T-cell (primary cell): ENCODE measurements at regions of chr16 and their contacts with region 1.

Region 1: GRCh38 chr16:57648590-57649442 is 19.3 kb upstream of the ADGRG3 start:
- DNase-seq: peak; percentile 46 to 89 (median 79)
- ATAC-seq: peak; percentile 74 to 87 (median 84)
- H3K4me3 ChIP-seq: peak overlapping the region in 1 of 2 donors; percentile 32
- H3K4me3 Mint-ChIP-seq: peak overlapping the region; percentile 23 to 51 (median 25)
- H3K27ac ChIP-seq: peak overlapping the region; percentile 32
- H3K27ac Mint-ChIP-seq: peak overlapping the region; percentile 16 to 63
- H3K4me1 ChIP-seq: peaks cover 0 to 90% of the 10 kb centered on the region in 2 experiments
- H3K4me1 Mint-ChIP-seq: peaks cover 30 to 38% (median 30%) of the 10 kb centered on the region in 3 donors
- H3K27me3 ChIP-seq: peaks cover 0 to 2% of the 10 kb centered on the region in 2 experiments
- H3K27me3 Mint-ChIP-seq: no peaks in the 10 kb centered on the region

Region 2: GRCh38 chr16:57555831-57556230 is 93.0 kb before region 1 on chr16:
- CTCF ChIA-PET with region 1: no interaction called
- POLR2A ChIA-PET with region 1: no interaction called
- DNase-seq: no peak
- ATAC-seq: no peak
- H3K4me3 ChIP-seq: no peak overlapping the region
- H3K4me3 Mint-ChIP-seq: no peak overlapping the region
- H3K27ac ChIP-seq: no peak overlapping the region
- H3K27ac Mint-ChIP-seq: peak overlapping the region in 1 of 2 donors; percentile 25
- H3K4me1 ChIP-seq: peaks cover 10 to 11% of the 10 kb centered on the region in 2 experiments
- H3K4me1 Mint-ChIP-seq: peaks cover 15 to 34% (median 23%) of the 10 kb centered on the region in 3 donors
- H3K27me3 ChIP-seq: no peaks in the 10 kb centered on the region
- H3K27me3 Mint-ChIP-seq: peaks cover 0 to 6% of the 10 kb centered on the region in 2 donors

Region 3: DNA sequence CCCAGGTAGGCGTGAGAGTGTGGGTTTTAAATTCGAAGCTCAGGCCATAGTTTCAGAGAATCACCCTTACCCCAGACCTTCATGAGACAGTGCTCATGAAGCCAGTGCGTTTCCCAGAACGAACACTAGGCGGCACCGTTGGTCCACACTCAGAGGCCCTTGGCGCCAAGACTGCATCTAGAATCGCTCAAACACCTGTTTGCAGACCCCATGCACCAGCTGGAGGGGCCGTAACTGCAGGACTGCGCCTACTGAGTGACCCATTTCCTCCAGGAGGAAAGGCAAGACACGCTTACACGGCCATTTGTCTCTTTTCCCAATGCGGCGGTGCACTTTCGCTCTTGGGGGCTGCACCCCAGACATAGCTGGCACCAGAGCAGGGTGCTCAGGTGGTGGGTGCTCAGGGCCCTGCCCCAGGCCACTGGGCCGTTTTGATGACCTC is 72.4 kb before region 1 on chr16:
- CTCF ChIA-PET with region 1: interaction called, 32 to 33 read pairs
- POLR2A ChIA-PET with region 1: no interaction called
- DNase-seq: peak; percentile 49 to 91 (median 76)
- ATAC-seq: peak; percentile 74 to 87 (median 80)
- H3K4me3 ChIP-seq: no peak overlapping the region
- H3K4me3 Mint-ChIP-seq: no peak overlapping the region
- H3K27ac ChIP-seq: peak overlapping the region; percentile 63
- H3K27ac Mint-ChIP-seq: peak overlapping the region; percentile 52 to 83
- H3K4me1 ChIP-seq: peaks cover 9 to 52% of the 10 kb centered on the region in 2 experiments
- H3K4me1 Mint-ChIP-seq: peaks cover 28 to 44% (median 30%) of the 10 kb centered on the region in 3 donors
- H3K27me3 ChIP-seq: no peaks in the 10 kb centered on the region
- H3K27me3 Mint-ChIP-seq: peaks cover 0 to 8% of the 10 kb centered on the region in 2 donors

Region 4: GRCh38 chr16:57591086-57591869 is 57.5 kb before region 1 on chr16:
- CTCF ChIA-PET with region 1: interaction called, 5 to 14 read pairs
- POLR2A ChIA-PET with region 1: interaction called in 1 of 2 experiments, 4 read pairs
- DNase-seq: peak in 31 of 35 experiments; percentile 28 to 78 (median 48)
- ATAC-seq: peak; percentile 31 to 50 (median 32)
- H3K4me3 ChIP-seq: no peak overlapping the region
- H3K4me3 Mint-ChIP-seq: peak overlapping the region in 2 of 3 donors; percentile 60 to 72
- H3K27ac ChIP-seq: peak overlapping the region; percentile 73
- H3K27ac Mint-ChIP-seq: peak overlapping the region; percentile 91 to 95
- H3K4me1 ChIP-seq: peaks cover 17 to 63% of the 10 kb centered on the region in 2 experiments
- H3K4me1 Mint-ChIP-seq: peaks cover 27 to 51% (median 36%) of the 10 kb centered on the region in 3 donors
- H3K27me3 ChIP-seq: no peaks in the 10 kb centered on the region
- H3K27me3 Mint-ChIP-seq: no peaks in the 10 kb centered on the region

Region 5: GRCh38 chr16:57609541-57610401 is 39.0 kb before region 1 on chr16:
- CTCF ChIA-PET with region 1: interaction called, 4 to 13 read pairs
- POLR2A ChIA-PET with region 1: interaction called in 1 of 2 experiments, 3 read pairs
- DNase-seq: peak in 33 of 35 experiments; percentile 22 to 76 (median 53)
- ATAC-seq: peak; percentile 85 to 97 (median 86)
- H3K4me3 ChIP-seq: peak overlapping the region in 1 of 2 donors; percentile 21
- H3K4me3 Mint-ChIP-seq: peak overlapping the region; percentile 56 to 67 (median 63)
- H3K27ac ChIP-seq: peak overlapping the region; percentile 81
- H3K27ac Mint-ChIP-seq: peak overlapping the region; percentile 83 to 87
- H3K4me1 ChIP-seq: peaks cover 8 to 47% of the 10 kb centered on the region in 2 experiments
- H3K4me1 Mint-ChIP-seq: peaks cover 18 to 41% (median 33%) of the 10 kb centered on the region in 3 donors
- H3K27me3 ChIP-seq: peaks cover 0 to 4% of the 10 kb centered on the region in 2 experiments
- H3K27me3 Mint-ChIP-seq: no peaks in the 10 kb centered on the region